Gastrocnemius medialis (tissue), 4 donors: ENCODE measurements at regions of chr3 and their contacts with region 1.

Region 1: DNA sequence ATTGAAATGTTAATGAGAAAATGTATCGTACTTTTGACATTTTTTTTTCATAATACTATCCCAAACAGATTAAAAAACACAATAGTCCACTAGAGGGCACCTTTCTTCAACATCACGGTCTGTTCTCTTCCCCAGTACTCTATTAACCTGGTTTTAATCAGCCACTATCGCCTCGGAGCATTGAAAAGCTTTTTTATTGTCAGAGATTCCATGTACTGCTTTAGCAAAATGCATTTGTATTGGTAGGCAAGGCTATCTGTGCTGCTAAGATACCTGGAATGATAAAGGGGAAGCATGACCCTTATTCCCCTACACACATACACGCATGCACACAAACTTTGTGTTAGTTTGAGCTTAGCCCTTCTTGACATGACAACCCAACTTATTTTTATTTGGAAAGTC is 160.1 kb upstream of the IL12A start:
- DNase-seq: no peak
- ATAC-seq: peak; percentile 61 to 66
- H3K4me3 ChIP-seq: peak overlapping the region; percentile 17 to 51 (median 24)
- H3K27ac ChIP-seq: peak overlapping the region; percentile 80 to 84 (median 82)
- H3K4me1 ChIP-seq: peaks cover 34 to 48% of the 10 kb centered on the region in 2 donors
- H3K27me3 ChIP-seq: no peaks in the 10 kb centered on the region
- CTCF ChIP-seq: peak; percentile 58 to 65 (median 63)
- POLR2A ChIP-seq: no peak

Region 2: DNA sequence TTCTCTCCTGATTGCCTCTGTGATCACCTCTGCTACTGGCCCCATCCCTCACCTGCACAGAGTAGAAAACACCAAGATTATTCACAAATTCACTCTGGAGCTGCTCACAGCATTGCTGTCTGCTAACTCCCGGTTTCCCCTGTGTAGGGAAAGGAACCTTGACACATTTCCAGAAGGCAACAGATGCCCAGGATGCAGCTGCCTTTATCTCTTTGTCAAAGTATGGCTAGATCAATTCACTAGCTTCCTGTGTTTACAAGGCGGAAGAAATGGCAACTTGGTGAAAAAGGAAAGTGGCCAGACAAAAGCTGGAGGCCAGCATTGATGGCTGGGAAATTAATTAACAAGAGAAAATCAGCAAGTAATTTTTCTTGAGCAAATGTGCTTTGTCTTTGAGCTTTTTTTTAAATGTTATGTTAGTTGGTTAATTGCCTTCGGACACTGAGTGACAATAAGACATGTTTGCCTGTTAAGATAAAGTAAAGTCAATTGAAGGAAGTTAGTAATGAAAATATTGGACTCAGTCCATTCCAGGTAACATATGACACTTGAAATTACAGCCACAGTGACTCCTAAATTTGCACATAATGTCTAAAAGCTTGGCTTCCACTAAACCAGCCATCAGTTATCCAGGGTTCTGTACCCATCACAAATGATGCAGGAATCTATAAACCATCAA is 234.5 kb before region 1 on chr3:
- in situ Hi-C with region 1: no loop called
- intact Hi-C with region 1: no loop called
- DNase-seq: no peak
- ATAC-seq: peak; percentile 27 to 45
- H3K4me3 ChIP-seq: no peak overlapping the region
- H3K27ac ChIP-seq: no peak overlapping the region
- H3K4me1 ChIP-seq: no peaks in the 10 kb centered on the region
- H3K27me3 ChIP-seq: no peaks in the 10 kb centered on the region
- CTCF ChIP-seq: no peak
- POLR2A ChIP-seq: no peak

Region 3: GRCh38 chr3:159884661-159885402 is 56.3 kb after region 1 on chr3:
- in situ Hi-C with region 1: loop called in 3 of 4 experiments (anchors 5 to 10 kb)
- intact Hi-C with region 1: loop called (anchors 1 kb)
- DNase-seq: no peak
- ATAC-seq: no peak
- H3K4me3 ChIP-seq: no peak overlapping the region
- H3K27ac ChIP-seq: peak overlapping the region in 3 of 4 donors; percentile 39 to 92 (median 83)
- H3K4me1 ChIP-seq: peaks cover 60 to 68% of the 10 kb centered on the region in 2 donors
- H3K27me3 ChIP-seq: no peaks in the 10 kb centered on the region
- CTCF ChIP-seq: peak; percentile 24 to 57 (median 41)
- POLR2A ChIP-seq: no peak